ENCODE measurements at regions of chr17 and their contacts with region 1.

Region 1: DNA sequence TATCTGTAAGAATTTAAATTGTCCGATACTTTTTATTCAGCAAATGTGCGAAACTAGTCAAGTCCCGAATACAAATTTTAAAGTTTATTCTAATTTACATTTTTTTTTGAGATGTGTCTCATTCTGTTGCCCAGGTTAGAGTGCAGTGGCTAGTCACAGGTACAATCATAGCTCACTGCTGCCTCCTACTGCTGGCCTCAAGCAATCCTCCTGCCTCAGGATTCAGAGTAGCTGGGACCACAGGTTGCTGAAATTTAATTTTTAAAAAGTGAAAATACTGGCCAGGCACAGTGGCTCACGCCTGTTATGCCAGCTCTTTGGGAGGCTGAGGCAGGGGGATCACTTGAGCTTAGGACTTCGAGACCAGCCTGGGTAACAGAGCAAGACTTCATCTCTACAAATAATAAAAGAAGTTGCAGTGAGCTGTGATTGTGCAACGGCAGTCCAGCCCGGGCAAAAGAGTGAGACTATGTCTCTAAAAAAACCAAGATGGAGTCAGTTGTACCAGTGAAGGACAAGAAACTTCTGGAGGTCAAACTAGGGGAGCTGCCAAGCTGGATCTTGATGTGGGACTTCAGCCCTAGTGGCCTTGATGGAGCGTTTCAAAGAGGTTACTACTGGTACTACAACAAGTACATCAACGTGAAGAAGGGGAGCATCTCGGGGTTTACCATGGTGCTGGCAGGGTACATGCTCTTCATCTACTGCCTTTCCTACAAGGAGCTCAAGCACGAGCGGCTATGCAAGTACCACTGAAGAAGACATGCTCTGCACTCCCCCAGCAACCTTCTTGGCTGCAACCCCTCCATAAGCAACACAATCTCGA is 5.6 kb downstream of the POLG2 start:
- DNase-seq: peak; percentile 90
- H3K4me3 Mint-ChIP-seq: no peak overlapping the region
- H3K27ac Mint-ChIP-seq: no peak overlapping the region
- H3K4me1 Mint-ChIP-seq: peaks cover 25% of the 10 kb centered on the region
- H3K27me3 Mint-ChIP-seq: no peaks in the 10 kb centered on the region

Region 2: DNA sequence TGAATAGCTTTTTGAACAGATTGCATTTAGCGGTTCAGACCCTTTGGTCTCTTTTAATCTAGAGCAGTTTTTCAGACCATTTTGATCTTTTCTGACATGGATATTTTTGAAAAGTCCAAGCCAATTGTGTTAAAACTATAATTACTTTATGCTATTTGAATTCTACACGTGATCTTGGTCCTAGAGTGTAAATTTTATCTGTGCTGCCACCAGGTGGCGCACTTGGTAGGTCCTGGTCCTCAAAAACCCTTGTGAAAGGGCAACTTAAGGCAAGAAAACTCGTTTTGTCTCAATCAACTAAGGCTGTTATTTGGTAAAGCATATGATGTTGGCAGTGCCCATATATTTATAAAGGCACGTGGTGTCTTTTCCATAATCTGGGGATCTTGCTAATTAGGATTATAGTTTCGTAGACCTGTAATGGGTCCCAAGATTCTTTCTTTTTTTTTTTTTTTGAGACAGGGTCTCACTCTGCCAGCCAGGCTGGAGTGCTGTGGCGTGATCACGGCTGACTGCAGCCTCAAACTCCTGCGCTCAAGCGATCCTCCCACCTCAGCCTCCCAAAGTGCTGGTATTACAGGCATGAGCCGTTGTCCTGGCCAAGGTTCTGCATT is 184.3 kb before region 1 on chr17:
- intact Hi-C with region 1: loop called (anchors 5 kb)
- DNase-seq: peak; percentile 89
- H3K4me3 Mint-ChIP-seq: no peak overlapping the region
- H3K27ac Mint-ChIP-seq: no peak overlapping the region
- H3K4me1 Mint-ChIP-seq: peaks cover 4% of the 10 kb centered on the region
- H3K27me3 Mint-ChIP-seq: no peaks in the 10 kb centered on the region

Region 3: GRCh38 chr17:64320613-64321553 is 170.4 kb before region 1 on chr17:
- intact Hi-C with region 1: loop called (anchors 5 kb)
- DNase-seq: peak; percentile 88
- H3K4me3 Mint-ChIP-seq: peak overlapping the region; percentile 55
- H3K27ac Mint-ChIP-seq: no peak overlapping the region
- H3K4me1 Mint-ChIP-seq: peaks cover 2% of the 10 kb centered on the region
- H3K27me3 Mint-ChIP-seq: peaks cover 8% of the 10 kb centered on the region

Region 4: DNA sequence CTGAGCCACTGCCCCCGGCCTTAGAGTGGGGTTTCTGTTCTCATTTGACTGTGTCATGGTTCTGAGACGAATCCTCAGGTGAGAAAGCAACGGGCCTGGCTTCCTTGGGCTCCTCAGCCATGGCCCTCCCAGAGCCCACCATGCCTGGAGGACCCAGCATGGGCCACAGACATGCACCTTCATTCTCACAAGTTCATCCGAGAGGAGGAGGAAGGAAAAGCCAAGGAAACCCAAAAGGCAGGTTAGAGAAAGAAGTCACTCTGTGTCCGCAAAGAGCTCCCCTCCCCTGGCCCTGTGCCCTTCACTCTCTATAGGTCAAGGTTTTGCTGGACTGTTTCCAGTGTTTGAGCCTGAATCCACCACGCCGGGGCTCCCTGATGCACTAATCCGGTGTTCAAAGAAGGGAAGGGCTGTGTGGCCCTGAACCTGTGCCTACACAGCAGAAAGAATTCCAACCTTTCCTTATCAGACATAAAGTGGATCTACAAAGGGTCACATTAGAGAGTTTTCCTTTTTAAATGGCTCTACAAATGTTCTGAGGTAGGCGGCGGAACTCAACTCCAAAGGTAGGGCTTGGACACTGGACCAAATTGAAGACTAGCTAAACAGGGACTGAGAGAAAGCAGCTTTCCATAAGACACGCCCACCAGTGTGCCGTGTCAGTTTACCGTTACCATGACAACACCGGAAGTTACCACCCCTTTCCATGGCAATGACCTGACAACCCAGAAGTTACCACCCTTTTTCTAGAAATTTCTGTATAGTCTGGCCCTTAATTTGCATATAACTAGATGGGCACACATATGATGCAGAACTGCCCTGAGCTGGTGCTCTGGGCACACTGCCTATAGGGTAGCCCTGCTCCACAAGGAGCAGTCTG is 84.7 kb before region 1 on chr17:
- intact Hi-C with region 1: no loop called
- DNase-seq: peak; percentile 68
- H3K4me3 Mint-ChIP-seq: no peak overlapping the region
- H3K27ac Mint-ChIP-seq: no peak overlapping the region
- H3K4me1 Mint-ChIP-seq: peaks cover 8% of the 10 kb centered on the region
- H3K27me3 Mint-ChIP-seq: no peaks in the 10 kb centered on the region

Region 5: GRCh38 chr17:64459284-64459747 is 31.9 kb before region 1 on chr17:
- intact Hi-C with region 1: no loop called
- DNase-seq: no peak
- H3K4me3 Mint-ChIP-seq: no peak overlapping the region
- H3K27ac Mint-ChIP-seq: no peak overlapping the region
- H3K4me1 Mint-ChIP-seq: peaks cover 4% of the 10 kb centered on the region
- H3K27me3 Mint-ChIP-seq: peaks cover 3% of the 10 kb centered on the region

Measured in activated CD4-positive, alpha-beta T cell treated with anti-CD3 and anti-CD28 coated beads, Interleukin-2, amount 10 ng/mL, durations not matched to agents 24 days and 14 days (primary cell).